ENCODE measurements at regions of chr16 and their contacts with region 1.

Region 1: GRCh38 chr16:56203052-56203451 is 11.8 kb downstream of the GNAO1 start:
- DNase-seq: no peak
- H3K4me3 ChIP-seq: no peak overlapping the region
- H3K27ac ChIP-seq: no peak overlapping the region
- H3K4me1 ChIP-seq: peaks cover 15% of the 10 kb centered on the region
- H3K27me3 ChIP-seq: no peaks in the 10 kb centered on the region
- CTCF ChIP-seq: 0 out of 2 replicates have a peak, but pooled peaks have one; percentile 22

Region 2: DNA sequence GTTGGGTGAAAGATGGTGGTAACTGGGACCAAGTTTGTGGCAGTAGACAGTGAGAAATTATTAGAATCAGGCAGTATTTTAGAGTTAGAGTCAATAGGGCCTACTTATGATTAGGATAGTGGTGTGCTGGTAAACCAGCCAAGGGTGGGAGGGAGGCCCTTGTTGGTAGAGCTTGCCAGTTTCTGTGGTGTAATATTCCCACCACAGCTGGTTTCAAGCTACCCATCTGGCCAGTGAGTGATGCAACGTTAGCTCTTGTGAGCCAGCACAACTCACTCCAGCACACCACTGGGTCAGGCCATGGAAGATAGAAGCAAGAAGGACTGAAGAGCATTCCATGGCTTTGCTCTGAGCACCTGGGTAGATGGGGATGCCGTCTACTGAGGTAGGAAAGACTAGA is 23.1 kb after region 1 on chr16:
- CTCF ChIA-PET with region 1: no interaction called
- POLR2A ChIA-PET with region 1: no interaction called
- intact Hi-C with region 1: no loop called
- DNase-seq: no peak
- H3K4me3 ChIP-seq: no peak overlapping the region
- H3K27ac ChIP-seq: no peak overlapping the region
- H3K4me1 ChIP-seq: no peaks in the 10 kb centered on the region
- H3K27me3 ChIP-seq: no peaks in the 10 kb centered on the region
- CTCF ChIP-seq: no peak

Region 3: GRCh38 chr16:56300891-56301850 is 98.1 kb after region 1 on chr16:
- CTCF ChIA-PET with region 1: no interaction called
- POLR2A ChIA-PET with region 1: no interaction called
- intact Hi-C with region 1: loop called (anchors 5 kb)
- DNase-seq: peak in 1 of 2 experiments; percentile 56
- H3K4me3 ChIP-seq: no peak overlapping the region
- H3K27ac ChIP-seq: no peak overlapping the region
- H3K4me1 ChIP-seq: peaks cover 10% of the 10 kb centered on the region; the same call in 1 of the 2 replicates
- H3K27me3 ChIP-seq: no peaks in the 10 kb centered on the region
- CTCF ChIP-seq: no peak

Region 4: GRCh38 chr16:56450986-56451752 is 248.1 kb after region 1 on chr16 and contains the starts of genes NUDT21 and OGFOD1:
- CTCF ChIA-PET with region 1: no interaction called
- POLR2A ChIA-PET with region 1: no interaction called
- intact Hi-C with region 1: no loop called
- DNase-seq: peak; percentile 89 to 98
- H3K4me3 ChIP-seq: peak within 1 kb of the TSS; percentile 91
- H3K27ac ChIP-seq: peak within 1 kb of the TSS; percentile 66
- H3K4me1 ChIP-seq: peaks cover 31% of the 10 kb centered on the region
- H3K27me3 ChIP-seq: no peaks in the 10 kb centered on the region
- CTCF ChIP-seq: no peak
- total RNA-seq, gene NUDT21: 139 and 171 TPM in 2 replicates
- total RNA-seq, gene OGFOD1: 24.8 and 30.0 TPM in 2 replicates

Measured in PC-9 (cell line).